Left lung (tissue), 14 donors: ENCODE measurements at regions of chr11 and their contacts with region 1.

Region 1: GRCh38 chr11:2305140-2305840 is 3.5 kb downstream of the TSPAN32 start:
- DNase-seq: peak; percentile 66 to 97 (median 86)
- ATAC-seq: peak; percentile 85
- H3K4me3 ChIP-seq: no peak overlapping the region
- H3K27ac ChIP-seq: peak overlapping the region; percentile 64 to 65
- H3K4me1 ChIP-seq: peaks cover 16 to 73% of the 10 kb centered on the region in 2 donors
- H3K27me3 ChIP-seq: no peaks in the 10 kb centered on the region
- CTCF ChIP-seq: peak; percentile 87 to 97

Region 2: GRCh38 chr11:2526808-2527381 is 221.6 kb after region 1 on chr11:
- intact Hi-C with region 1: loop called in 1 of 2 experiments (anchors 10 kb)
- DNase-seq: peak in 2 of 4 donors; percentile 80 to 89
- ATAC-seq: peak; percentile 47
- H3K4me3 ChIP-seq: no peak overlapping the region
- H3K27ac ChIP-seq: peak overlapping the region in 1 of 2 donors; percentile 55
- H3K4me1 ChIP-seq: peaks cover 0 to 14% of the 10 kb centered on the region in 2 donors
- H3K27me3 ChIP-seq: no peaks in the 10 kb centered on the region
- CTCF ChIP-seq: no peak